Right ventricle myocardium inferior (tissue), 1 donor: ENCODE measurements at regions of chr6 and their contacts with region 1.

Region 1: DNA sequence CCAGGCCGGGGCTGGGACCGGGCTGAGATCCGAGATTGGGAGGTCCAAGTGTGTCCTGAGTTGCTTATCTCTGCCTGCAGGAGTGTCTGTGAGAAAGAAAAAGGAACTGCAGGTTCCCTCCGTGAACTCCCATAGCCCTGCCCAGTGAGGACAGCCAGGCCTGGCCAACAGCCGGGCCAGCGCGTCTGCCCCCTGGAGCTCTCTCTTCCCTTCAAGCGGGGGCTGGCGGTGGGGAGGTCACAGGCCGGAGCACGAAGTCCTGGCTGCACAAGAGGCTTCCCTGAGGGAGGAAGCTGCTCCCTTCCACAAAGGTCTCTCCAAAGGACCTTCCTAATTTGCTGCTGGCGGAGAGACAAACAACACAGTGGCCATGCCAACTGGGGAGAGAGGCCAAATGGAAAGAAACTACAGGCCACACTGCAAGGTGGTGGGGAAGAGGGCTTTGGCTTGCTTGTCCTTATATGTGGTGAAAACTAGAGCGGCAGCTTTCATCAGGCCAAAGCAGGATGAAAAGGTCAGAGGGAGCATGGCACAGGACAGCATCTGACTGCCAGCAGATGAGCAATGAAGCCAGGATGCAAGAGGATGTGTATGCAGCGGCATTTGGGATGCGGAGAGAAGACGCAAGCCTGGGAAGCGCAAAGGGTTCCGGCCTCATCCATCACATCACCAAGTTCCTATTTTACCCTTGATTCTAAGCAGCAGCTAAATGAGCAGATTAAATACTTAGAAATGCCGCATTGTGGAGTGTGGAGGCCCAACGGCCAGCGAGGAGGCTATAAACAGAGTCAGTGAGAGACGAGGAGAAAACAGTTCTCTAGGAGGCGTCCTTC is 260.0 kb downstream of the ERMARD start:
- DNase-seq: peak; percentile 84
- ATAC-seq: peak; percentile 92

Region 2: GRCh38 chr6:170043881-170044790 is 32.7 kb after region 1 on chr6:
- intact Hi-C with region 1: loop called (anchors 1 kb)
- DNase-seq: peak; percentile 56
- ATAC-seq: peak; percentile 42

Region 3: GRCh38 chr6:170165072-170165463 is 153.6 kb after region 1 on chr6:
- intact Hi-C with region 1: loop called (anchors 5 kb)
- DNase-seq: no peak
- ATAC-seq: peak; percentile 27